ENCODE measurements at regions of chr16 and their contacts with region 1.

Region 1: GRCh38 chr16:1492923-1493745 is at the start of gene TELO2:
- DNase-seq: peak; percentile 90
- ATAC-seq: peak; percentile 88
- total RNA-seq, gene TELO2: 18.9 TPM

Region 2: GRCh38 chr16:1420111-1420540 is 73.0 kb before region 1 on chr16:
- intact Hi-C with region 1: loop called (anchors 5 kb)
- DNase-seq: no peak
- ATAC-seq: no peak

Region 3: GRCh38 chr16:1533443-1533951 is 40.4 kb after region 1 on chr16 and contains the start of gene TMEM204:
- intact Hi-C with region 1: loop called (anchors 2 kb)
- DNase-seq: peak; percentile 87
- ATAC-seq: peak; percentile 65
- total RNA-seq, gene TMEM204: 30.7 TPM

Region 4: GRCh38 chr16:1545044-1546040 is 52.2 kb after region 1 on chr16:
- intact Hi-C with region 1: loop called (anchors 5 kb)
- DNase-seq: peak; percentile 82
- ATAC-seq: peak; percentile 81

Region 5: GRCh38 chr16:1705688-1706385 is 212.7 kb after region 1 on chr16 and contains the start of gene MAPK8IP3:
- intact Hi-C with region 1: loop called (anchors 1 kb)
- DNase-seq: peak; percentile 95
- ATAC-seq: peak; percentile 95
- total RNA-seq, gene MAPK8IP3: 66.4 TPM